ENCODE measurements at regions of chr12 and their contacts with region 1.

Region 1: DNA sequence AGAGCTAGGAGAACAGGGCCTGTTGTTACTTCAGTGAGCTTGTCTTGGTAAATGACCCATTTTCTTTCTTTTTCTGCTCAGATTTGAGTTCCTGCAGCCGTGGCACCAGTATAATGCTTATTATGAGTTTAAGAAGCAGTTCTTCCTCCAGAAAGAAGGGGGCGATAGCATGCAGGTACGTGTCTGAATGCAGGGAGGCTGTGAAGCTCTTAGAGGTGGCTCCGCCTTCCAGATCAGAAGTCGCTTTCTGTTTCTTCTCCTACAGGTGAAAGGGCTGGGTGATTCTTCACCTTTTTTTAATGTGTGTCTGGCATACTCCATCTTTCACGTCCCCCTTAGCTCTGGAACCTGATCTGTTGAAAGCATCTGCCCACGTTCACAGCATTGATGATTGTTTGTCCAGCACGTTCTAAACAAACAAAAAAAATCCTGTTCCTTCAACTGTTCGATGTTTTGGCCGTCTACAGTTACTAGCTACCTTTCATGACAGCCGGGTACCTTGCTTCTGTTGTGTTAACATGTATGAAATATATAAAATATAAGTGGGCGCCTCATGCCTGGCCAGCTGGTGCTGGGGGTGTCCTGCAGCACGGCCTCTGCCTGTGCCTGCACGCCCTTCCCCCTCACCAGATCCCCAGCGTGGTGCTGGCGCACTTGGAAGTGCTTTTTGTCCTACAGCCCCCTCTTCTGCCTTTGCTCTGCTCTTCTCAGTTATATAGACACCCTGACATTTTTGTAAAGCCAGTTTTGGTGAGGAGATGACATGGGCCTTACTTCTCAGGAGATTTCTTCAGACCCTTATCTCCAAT is 44.6 kb downstream of the SFSWAP start:
- DNase-seq: peak; percentile 50
- ATAC-seq: peak; percentile 84
- H3K4me3 Mint-ChIP-seq: no peak overlapping the region
- H3K27ac Mint-ChIP-seq: peak overlapping the region; percentile 96
- H3K4me1 Mint-ChIP-seq: peaks cover 27% of the 10 kb centered on the region
- H3K27me3 Mint-ChIP-seq: no peaks in the 10 kb centered on the region
- CTCF ChIP-seq: peak; percentile 70

Region 2: GRCh38 chr12:131729254-131729955 is 26.1 kb before region 1 on chr12:
- CTCF ChIA-PET with region 1: interaction called, 11 read pairs
- POLR2A ChIA-PET with region 1: no interaction called
- DNase-seq: no peak
- ATAC-seq: peak; percentile 58
- H3K4me3 Mint-ChIP-seq: no peak overlapping the region
- H3K27ac Mint-ChIP-seq: peak overlapping the region; percentile 97
- H3K4me1 Mint-ChIP-seq: peaks cover 52% of the 10 kb centered on the region
- H3K27me3 Mint-ChIP-seq: no peaks in the 10 kb centered on the region
- CTCF ChIP-seq: no peak

Region 3: DNA sequence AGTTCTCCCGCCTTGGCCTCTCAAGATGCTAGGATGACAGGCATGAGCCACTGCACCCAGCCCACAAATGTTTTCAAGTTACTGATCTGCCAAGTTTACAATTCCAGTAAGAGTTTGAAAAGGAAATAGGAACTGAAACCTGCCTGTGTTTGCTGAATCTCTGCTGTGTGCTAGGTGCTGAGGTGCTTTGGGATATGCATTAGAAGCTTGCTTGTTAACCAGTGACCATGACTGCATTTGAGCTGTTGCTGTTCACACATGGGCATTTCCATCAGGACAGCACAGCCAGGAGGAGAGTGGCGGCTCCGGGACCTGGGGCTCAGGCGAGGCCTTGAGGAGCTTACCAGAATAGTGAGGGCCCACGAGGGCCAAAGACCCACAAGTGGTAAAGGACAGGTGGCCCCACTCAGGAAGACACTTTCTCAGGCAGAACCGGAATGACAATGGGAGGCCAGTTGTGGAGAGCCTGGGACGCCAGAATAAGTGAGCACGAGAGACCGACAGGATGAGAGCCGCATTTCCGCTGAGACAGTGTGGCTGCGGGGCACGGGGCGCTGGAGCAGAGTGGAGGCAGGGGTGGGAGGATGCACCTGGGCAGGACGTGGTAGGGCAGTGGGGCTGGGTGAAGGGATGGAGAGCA is 18.2 kb after region 1 on chr12:
- CTCF ChIA-PET with region 1: interaction called, 16 read pairs
- POLR2A ChIA-PET with region 1: no interaction called
- DNase-seq: peak; percentile 43
- ATAC-seq: peak; percentile 88
- H3K4me3 Mint-ChIP-seq: peak overlapping the region; percentile 21; the same call in 1 of the 2 replicates
- H3K27ac Mint-ChIP-seq: peak overlapping the region; percentile 91
- H3K4me1 Mint-ChIP-seq: peaks cover 50% of the 10 kb centered on the region
- H3K27me3 Mint-ChIP-seq: no peaks in the 10 kb centered on the region
- CTCF ChIP-seq: no peak